A549 (cell line): ENCODE measurements at regions of chr15 and their contacts with region 1.

Region 1: GRCh38 chr15:69058830-69059556 is 44.5 kb downstream of the NOX5 start:
- DNase-seq: peak; percentile 92 to 99
- ATAC-seq: peak; percentile 79 to 92
- H3K4me3 ChIP-seq: no peak overlapping the region
- H3K27ac ChIP-seq: peak overlapping the region; percentile 27 to 63; a peak in 5 of 6 replicates
- H3K4me1 ChIP-seq: peaks cover 26% of the 10 kb centered on the region
- CTCF ChIP-seq: peak; percentile 99
- EP300 ChIP-seq: no peak
- POLR2A ChIP-seq: no peak
- RAD21 ChIP-seq: peak; percentile 99

Region 2: GRCh38 chr15:68651916-68652525 is 407.0 kb before region 1 on chr15:
- CTCF ChIA-PET with region 1: no interaction called
- POLR2A ChIA-PET with region 1: no interaction called
- DNase-seq: no peak
- ATAC-seq: no peak
- H3K4me3 ChIP-seq: no peak overlapping the region
- H3K27ac ChIP-seq: no peak overlapping the region
- H3K4me1 ChIP-seq: no peaks in the 10 kb centered on the region
- CTCF ChIP-seq: no peak
- EP300 ChIP-seq: no peak
- POLR2A ChIP-seq: no peak
- RAD21 ChIP-seq: no peak

Region 3: DNA sequence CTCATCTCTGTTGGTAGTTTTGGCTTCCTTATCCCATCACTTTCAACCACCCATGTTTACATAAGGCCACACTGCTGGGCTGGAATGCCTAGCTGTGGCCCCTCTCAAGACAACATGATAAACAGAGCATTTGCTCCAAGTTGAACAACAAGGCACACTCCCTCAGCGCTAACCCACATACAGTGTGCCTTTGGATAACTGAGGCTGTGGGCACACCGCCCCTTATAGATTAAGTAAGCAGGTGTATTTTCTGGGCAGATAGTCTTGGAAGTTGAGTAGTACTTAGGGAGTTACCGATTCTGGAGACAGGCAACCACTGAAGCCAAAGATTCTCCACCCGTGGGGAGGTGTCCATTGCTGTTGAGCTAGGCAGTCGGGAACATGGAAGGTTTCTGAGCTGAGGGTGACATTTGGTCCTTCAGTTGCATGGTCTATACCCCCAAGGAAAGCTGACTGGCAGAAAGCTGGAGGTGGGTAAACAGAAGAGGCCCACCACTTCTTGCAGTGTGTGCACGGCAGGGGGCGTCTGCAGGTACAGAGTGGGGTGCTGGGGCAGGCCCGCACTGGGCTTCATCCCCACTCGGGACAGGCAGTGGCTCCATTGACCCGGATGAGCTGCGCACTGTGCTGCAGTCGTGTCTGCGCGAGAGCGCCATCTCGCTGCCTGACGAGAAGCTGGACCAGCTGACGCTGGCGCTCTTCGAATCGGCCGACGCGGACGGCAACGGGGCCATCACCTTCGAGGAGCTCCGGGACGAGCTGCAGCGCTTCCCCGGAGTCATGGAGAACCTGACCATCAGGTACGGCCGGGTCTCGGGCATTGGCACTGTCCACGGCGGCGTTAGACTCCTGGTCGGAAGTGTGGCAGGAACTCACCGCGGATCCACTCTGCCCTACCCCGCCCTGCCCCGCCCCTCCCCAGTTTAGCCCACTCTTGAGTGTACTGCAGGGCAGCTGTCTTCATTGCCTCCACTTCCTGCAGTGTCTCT is 27.7 kb before region 1 on chr15:
- CTCF ChIA-PET with region 1: interaction called, 20 read pairs
- POLR2A ChIA-PET with region 1: no interaction called
- DNase-seq: peak; percentile 82
- ATAC-seq: peak; percentile 87 to 93
- H3K4me3 ChIP-seq: peak overlapping the region; percentile 47
- H3K27ac ChIP-seq: peak overlapping the region; percentile 57 to 78
- H3K4me1 ChIP-seq: peaks cover 23% of the 10 kb centered on the region
- CTCF ChIP-seq: peak; percentile 90
- EP300 ChIP-seq: no peak
- POLR2A ChIP-seq: 0 out of 2 replicates have a peak, but pooled peaks have one; percentile 6
- RAD21 ChIP-seq: peak; percentile 57 to 69

Region 4: GRCh38 chr15:69090197-69090948 is 31.4 kb after region 1 on chr15:
- CTCF ChIA-PET with region 1: interaction called, 27 read pairs
- POLR2A ChIA-PET with region 1: no interaction called
- DNase-seq: peak in 1 of 2 experiments; percentile 34
- ATAC-seq: no peak
- H3K4me3 ChIP-seq: no peak overlapping the region
- H3K27ac ChIP-seq: peak overlapping the region in 1 of 2 experiments; percentile 80; a peak in 3 of 6 replicates
- H3K4me1 ChIP-seq: peaks cover 51% of the 10 kb centered on the region
- CTCF ChIP-seq: no peak
- EP300 ChIP-seq: no peak
- POLR2A ChIP-seq: no peak
- RAD21 ChIP-seq: no peak

Region 5: DNA sequence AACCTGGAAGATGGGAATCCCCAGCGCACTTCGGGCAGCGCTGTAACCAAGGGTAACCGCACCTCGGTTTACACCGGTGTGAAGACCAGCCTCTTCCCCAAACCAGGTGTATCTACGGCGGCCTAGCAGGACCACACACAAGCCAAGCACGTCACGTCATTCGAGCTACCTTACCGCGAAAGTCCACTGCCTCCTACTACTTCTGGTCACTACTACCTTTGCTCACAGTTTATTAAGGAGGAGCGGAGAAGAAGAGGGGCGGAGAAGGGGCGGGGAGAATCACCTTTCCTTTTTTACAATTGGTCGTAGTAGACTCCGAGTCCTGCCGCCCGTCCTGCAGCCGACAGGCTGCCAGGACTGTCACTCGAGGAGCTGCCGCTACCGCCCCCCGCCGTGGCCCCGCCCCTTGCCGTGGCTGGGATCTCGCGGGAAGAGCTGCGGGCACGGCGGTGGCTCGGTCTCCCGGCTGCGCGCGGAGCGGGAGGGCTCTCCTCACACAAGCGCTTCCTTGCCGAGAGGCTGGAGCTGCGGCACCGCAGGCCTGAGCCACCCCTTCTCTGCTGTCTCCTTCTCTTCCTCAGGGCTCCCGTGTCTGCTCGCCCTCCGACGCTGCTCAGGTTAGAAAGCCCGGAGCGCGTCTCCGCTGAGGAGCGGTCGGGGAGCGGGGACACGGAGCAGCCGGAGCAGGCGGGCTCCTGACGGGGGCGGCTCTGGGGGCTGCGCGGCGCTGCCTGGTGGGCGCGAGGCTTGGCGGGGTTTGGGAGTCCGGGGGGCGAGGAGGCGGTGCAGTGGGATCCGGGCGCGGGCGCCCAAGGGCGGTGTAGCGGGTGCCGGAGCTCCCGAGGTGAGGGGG is 101.4 kb after region 1 on chr15 and contains the start of gene GLCE:
- CTCF ChIA-PET with region 1: interaction called, 36 read pairs
- POLR2A ChIA-PET with region 1: interaction called, 4 read pairs
- DNase-seq: peak; percentile 97 to 99
- ATAC-seq: peak; percentile 93 to 96
- H3K4me3 ChIP-seq: peak within 1 kb of the TSS; percentile 82
- H3K27ac ChIP-seq: peak within 1 kb of the TSS; percentile 84 to 89
- H3K4me1 ChIP-seq: peaks cover 22% of the 10 kb centered on the region
- CTCF ChIP-seq: 0 out of 3 replicates have a peak, but pooled peaks have one; percentile 4
- EP300 ChIP-seq: no peak
- POLR2A ChIP-seq: peak; percentile 96
- RAD21 ChIP-seq: peak in 1 of 2 experiments; percentile 12; a peak in 2 of 5 replicates
- polyA plus RNA-seq, gene GLCE: 41.8 TPM in 2 replicates

Region 6: GRCh38 chr15:69290346-69291164 is 231.6 kb after region 1 on chr15:
- CTCF ChIA-PET with region 1: interaction called, 13 read pairs
- POLR2A ChIA-PET with region 1: no interaction called
- DNase-seq: no peak
- ATAC-seq: peak in 1 of 2 experiments; percentile 25; a peak in 1 of 6 replicates
- H3K4me3 ChIP-seq: no peak overlapping the region
- H3K27ac ChIP-seq: peak overlapping the region in 1 of 2 experiments; percentile 37; a peak in 3 of 6 replicates
- H3K4me1 ChIP-seq: peaks cover 22% of the 10 kb centered on the region
- CTCF ChIP-seq: no peak
- EP300 ChIP-seq: no peak
- POLR2A ChIP-seq: no peak
- RAD21 ChIP-seq: no peak

Region 7: DNA sequence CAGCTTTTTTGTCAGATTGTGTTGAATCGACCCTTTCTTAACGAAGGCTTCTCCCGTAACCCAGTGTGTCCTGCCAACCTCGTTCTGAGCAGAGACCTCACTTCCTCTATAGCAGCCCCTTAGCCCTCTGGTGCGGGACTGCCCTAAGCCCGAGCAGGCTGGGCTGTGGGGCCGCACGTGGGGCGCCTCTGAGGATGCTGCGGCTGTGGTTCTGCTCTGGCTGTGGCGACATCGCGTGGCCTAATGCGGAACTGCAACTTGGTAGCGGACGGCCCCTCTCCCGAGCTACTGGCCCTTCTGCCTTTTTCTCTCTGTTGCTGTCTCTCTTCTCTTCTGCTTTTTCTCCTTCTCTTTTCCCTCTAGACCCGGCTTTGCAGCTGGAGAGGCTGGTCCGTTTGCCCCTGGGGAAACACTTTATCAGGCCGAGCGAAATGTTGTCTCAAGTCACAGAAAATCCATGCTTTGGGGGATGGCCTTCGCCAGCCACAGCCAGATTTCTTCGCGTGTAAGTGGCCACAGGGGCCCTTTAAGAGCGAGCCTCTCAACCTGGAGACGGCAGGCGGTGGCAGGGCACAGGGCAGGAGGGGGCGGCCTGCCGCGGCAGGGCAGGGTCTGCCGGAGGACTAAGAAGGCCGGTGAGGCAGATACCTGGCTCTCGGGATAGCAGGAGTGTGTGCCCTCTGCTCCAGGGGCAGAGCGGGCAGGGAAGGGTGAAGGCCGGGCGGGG is 335.7 kb after region 1 on chr15:
- CTCF ChIA-PET with region 1: interaction called, 198 read pairs
- POLR2A ChIA-PET with region 1: no interaction called
- DNase-seq: peak; percentile 74 to 93
- ATAC-seq: peak; percentile 81 to 93
- H3K4me3 ChIP-seq: no peak overlapping the region
- H3K27ac ChIP-seq: peak overlapping the region; percentile 24 to 66; a peak in 5 of 6 replicates
- H3K4me1 ChIP-seq: peaks cover 26% of the 10 kb centered on the region
- CTCF ChIP-seq: peak; percentile 90
- EP300 ChIP-seq: no peak
- POLR2A ChIP-seq: no peak
- RAD21 ChIP-seq: peak; percentile 92 to 94

Region 8: GRCh38 chr15:69468241-69469121 is 409.5 kb after region 1 on chr15:
- CTCF ChIA-PET with region 1: interaction called, 54 read pairs
- POLR2A ChIA-PET with region 1: no interaction called
- DNase-seq: no peak
- ATAC-seq: peak; percentile 7 to 12; a peak in 2 of 6 replicates
- H3K4me3 ChIP-seq: no peak overlapping the region
- H3K27ac ChIP-seq: no peak overlapping the region
- H3K4me1 ChIP-seq: peaks cover 28% of the 10 kb centered on the region
- CTCF ChIP-seq: no peak
- EP300 ChIP-seq: no peak
- POLR2A ChIP-seq: no peak
- RAD21 ChIP-seq: no peak